ENCODE measurements at regions of chr11 and their contacts with region 1.

Region 1: GRCh38 chr11:65204646-65205601 is 23.2 kb downstream of the CAPN1 start:
- DNase-seq: no peak
- H3K4me3 ChIP-seq: no peak overlapping the region
- H3K27ac ChIP-seq: no peak overlapping the region
- H3K4me1 ChIP-seq: no peaks in the 10 kb centered on the region
- H3K27me3 ChIP-seq: no peaks in the 10 kb centered on the region
- CTCF ChIP-seq: peak; percentile 67 to 85 (median 82)
- POLR2A ChIP-seq: no peak

Region 2: GRCh38 chr11:64971421-64972233 is 233.3 kb before region 1 on chr11 and contains the start of gene MAJIN:
- intact Hi-C with region 1: no loop called
- DNase-seq: no peak
- H3K4me3 ChIP-seq: peak within 1 kb of the TSS in 3 of 4 donors; percentile 27 to 54 (median 36)
- H3K27ac ChIP-seq: peak within 1 kb of the TSS; percentile 65 to 81 (median 72)
- H3K4me1 ChIP-seq: peaks cover 0 to 33% (median 5%) of the 10 kb centered on the region in 3 donors
- H3K27me3 ChIP-seq: peaks cover 0 to 17% (median 0%) of the 10 kb centered on the region in 4 donors
- CTCF ChIP-seq: no peak
- POLR2A ChIP-seq: peak in 1 of 4 donors; percentile 25
- total RNA-seq, gene MAJIN: not detected

Region 3: GRCh38 chr11:65251476-65251875 is 46.6 kb after region 1 on chr11:
- intact Hi-C with region 1: loop called (anchors 10 kb)
- DNase-seq: no peak
- H3K4me3 ChIP-seq: no peak overlapping the region
- H3K27ac ChIP-seq: no peak overlapping the region
- H3K4me1 ChIP-seq: peaks cover 0 to 12% (median 0%) of the 10 kb centered on the region in 3 donors
- H3K27me3 ChIP-seq: peaks cover 0 to 3% (median 0%) of the 10 kb centered on the region in 4 donors
- CTCF ChIP-seq: no peak
- POLR2A ChIP-seq: no peak